Calu3 (cell line): ENCODE measurements at regions of chr1 and their contacts with region 1.

Region 1: DNA sequence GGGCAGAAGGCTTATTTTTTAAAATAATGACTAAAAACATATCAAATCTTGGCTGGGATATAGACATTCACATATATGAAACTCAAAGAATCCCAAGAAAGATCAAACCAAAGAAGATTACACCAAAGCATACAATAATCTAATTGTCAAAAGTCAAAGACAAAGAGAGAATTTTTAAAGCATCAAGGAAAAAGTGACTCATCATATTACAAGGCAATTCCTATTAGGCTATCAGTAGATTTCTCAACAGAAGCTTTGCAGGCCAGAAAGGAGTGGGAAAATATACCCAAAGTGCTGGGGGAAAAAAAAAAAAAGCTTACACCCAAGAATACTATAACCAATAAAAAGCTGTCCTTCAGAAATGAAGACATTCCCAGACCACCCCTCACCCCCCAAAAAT is 375.6 kb downstream of the BRINP2 start:
- DNase-seq: no peak
- H3K4me3 Mint-ChIP-seq: no peak overlapping the region
- H3K27ac Mint-ChIP-seq: no peak overlapping the region
- H3K4me1 Mint-ChIP-seq: no peaks in the 10 kb centered on the region
- H3K27me3 Mint-ChIP-seq: no peaks in the 10 kb centered on the region
- CTCF ChIP-seq: no peak

Region 2: GRCh38 chr1:177567407-177567806 is 21.1 kb after region 1 on chr1:
- CTCF ChIA-PET with region 1: no interaction called
- intact Hi-C with region 1: loop called (anchors 1 kb)
- DNase-seq: peak; percentile 35
- H3K4me3 Mint-ChIP-seq: no peak overlapping the region
- H3K27ac Mint-ChIP-seq: no peak overlapping the region
- H3K4me1 Mint-ChIP-seq: no peaks in the 10 kb centered on the region
- H3K27me3 Mint-ChIP-seq: peaks cover 27% of the 10 kb centered on the region
- CTCF ChIP-seq: peak; percentile 25